Posterior vena cava (tissue), 2 donors: ENCODE measurements at regions of chrX and their contacts with region 1.

Region 1: GRCh38 chrX:42934020-42934726 is 156.2 kb upstream of the PPP1R2C start:
- DNase-seq: no peak

Region 2: GRCh38 chrX:41695426-41695825 is 1238.7 kb before region 1 on chrX:
- intact Hi-C with region 1: loop called in 1 of 2 experiments (anchors 5 kb)
- DNase-seq: no peak